HEK293 (cell line): ENCODE measurements at regions of chr1 and their contacts with region 1.

Region 1: GRCh38 chr1:39196244-39197215 is 8.0 kb upstream of the MACF1 start:
- H3K4me3 ChIP-seq: no peak overlapping the region
- H3K27ac ChIP-seq: no peak overlapping the region
- H3K4me1 ChIP-seq: peaks cover 10% of the 10 kb centered on the region
- CTCF ChIP-seq: no peak

Region 2: GRCh38 chr1:39116868-39117728 is 79.4 kb before region 1 on chr1:
- CTCF ChIA-PET with region 1: interaction called, 11 read pairs
- POLR2A ChIA-PET with region 1: no interaction called
- H3K4me3 ChIP-seq: no peak overlapping the region
- H3K27ac ChIP-seq: no peak overlapping the region
- H3K4me1 ChIP-seq: peaks cover 31% of the 10 kb centered on the region
- CTCF ChIP-seq: no peak

Region 3: GRCh38 chr1:39158327-39159086 is 38.0 kb before region 1 on chr1:
- CTCF ChIA-PET with region 1: interaction called, 21 read pairs
- POLR2A ChIA-PET with region 1: no interaction called
- H3K4me3 ChIP-seq: peak overlapping the region; percentile 42
- H3K27ac ChIP-seq: no peak overlapping the region
- H3K4me1 ChIP-seq: peaks cover 16% of the 10 kb centered on the region
- CTCF ChIP-seq: 0 out of 2 replicates have a peak, but pooled peaks have one; percentile 13

Region 4: DNA sequence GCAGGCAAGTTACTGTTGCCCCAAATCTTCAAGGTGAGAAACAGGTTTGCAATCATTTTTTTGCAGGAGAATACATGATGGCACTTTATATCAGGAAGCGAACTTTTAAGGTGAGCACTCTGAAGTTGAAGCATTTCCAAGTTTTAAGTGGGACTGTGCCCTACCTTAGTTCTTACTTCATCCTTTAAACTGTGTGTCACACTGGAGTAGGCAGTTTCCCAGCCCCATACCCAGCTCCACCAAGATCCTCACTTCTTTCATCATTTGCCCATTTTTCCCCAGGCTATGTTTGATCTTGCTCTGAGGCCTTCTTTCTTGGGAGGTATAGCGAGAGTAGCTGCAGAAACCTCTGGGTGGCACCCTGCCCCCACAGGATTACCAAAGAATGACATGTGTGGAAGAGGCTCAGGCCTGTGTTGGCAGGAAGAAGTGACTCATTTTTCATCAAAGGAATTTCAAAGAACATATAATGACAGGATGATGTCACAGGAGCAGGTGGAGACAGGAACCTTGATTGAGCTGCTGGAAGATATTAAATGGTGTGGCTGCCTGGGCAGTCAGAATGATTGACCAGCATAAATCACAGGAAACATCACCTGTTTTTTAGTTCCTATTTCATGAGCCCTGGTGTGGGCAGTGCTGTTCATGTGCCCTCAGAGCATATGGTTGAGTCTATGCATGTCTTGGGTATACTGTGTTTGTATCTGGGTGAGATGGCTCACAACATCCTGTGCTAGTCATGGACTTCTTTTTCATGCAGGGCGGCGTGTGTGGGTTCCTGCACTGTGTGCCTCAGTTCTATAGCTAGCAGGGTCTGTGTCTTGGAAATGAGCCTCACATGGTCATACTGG is 12.8 kb before region 1 on chr1:
- CTCF ChIA-PET with region 1: interaction called, 20 read pairs
- POLR2A ChIA-PET with region 1: interaction called, 3 read pairs
- H3K4me3 ChIP-seq: no peak overlapping the region
- H3K27ac ChIP-seq: peak overlapping the region; percentile 1; the same call in 1 of the 2 replicates
- H3K4me1 ChIP-seq: peaks cover 18% of the 10 kb centered on the region
- CTCF ChIP-seq: peak; percentile 75

Region 5: DNA sequence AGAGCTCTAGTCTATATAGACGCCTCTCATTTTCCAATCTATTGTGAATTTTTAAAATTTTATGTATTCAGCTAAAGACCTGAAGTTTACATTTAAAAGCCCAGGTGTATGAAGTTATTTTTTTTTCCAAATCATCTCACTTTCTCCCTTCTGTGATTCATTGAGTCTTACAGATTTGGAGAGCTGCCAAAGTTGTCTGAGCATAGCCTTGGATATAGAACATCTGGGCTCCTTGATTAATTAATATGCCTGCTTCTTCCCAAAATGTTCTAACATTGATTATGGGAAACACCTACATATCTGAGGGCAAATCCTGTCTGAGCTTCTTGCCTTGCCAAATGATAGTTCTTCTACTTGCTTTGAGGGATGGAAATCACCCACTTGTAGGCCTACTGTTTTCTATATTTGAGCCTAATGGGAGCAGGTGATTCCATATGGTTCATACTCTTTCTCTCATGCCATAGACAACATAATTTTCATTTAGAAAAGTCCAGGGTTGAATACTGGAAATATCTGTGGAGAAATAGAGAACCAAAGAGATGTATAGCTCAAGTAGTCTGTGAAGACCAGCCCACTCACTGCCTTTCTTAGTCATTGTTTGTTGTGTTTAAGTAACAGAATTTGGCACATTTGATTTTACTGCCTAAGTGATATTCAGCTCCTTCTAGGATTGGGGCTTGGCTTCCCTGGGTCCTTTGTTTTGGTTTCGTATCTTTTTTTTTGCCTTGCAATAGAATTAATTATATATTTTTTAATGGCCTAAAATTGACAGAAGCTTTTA is 54.1 kb after region 1 on chr1:
- CTCF ChIA-PET with region 1: interaction called, 184 read pairs
- POLR2A ChIA-PET with region 1: no interaction called
- H3K4me3 ChIP-seq: no peak overlapping the region
- H3K27ac ChIP-seq: no peak overlapping the region
- H3K4me1 ChIP-seq: peaks cover 4% of the 10 kb centered on the region; the same call in 1 of the 2 replicates
- CTCF ChIP-seq: no peak

Region 6: DNA sequence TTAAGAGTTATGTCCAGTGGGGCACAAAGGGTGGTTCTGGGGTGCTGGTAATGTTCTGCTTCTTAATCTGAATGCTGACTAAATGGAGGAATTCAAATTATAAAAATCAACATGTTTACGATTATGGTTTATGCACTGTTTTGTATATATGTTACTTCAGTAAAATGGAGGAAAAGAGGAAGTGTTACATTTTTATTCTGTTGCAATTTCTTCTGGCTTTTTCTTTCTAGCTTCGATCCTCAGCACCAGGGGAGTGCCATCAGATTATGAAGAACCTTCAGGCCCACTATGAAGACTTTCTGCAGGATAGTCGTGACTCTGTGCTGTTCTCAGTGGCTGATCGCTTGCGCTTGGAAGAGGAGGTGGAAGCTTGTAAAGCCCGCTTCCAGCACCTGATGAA is 113.5 kb after region 1 on chr1:
- CTCF ChIA-PET with region 1: no interaction called
- POLR2A ChIA-PET with region 1: no interaction called
- H3K4me3 ChIP-seq: no peak overlapping the region
- H3K27ac ChIP-seq: no peak overlapping the region
- H3K4me1 ChIP-seq: no peaks in the 10 kb centered on the region
- CTCF ChIP-seq: no peak

Region 7: DNA sequence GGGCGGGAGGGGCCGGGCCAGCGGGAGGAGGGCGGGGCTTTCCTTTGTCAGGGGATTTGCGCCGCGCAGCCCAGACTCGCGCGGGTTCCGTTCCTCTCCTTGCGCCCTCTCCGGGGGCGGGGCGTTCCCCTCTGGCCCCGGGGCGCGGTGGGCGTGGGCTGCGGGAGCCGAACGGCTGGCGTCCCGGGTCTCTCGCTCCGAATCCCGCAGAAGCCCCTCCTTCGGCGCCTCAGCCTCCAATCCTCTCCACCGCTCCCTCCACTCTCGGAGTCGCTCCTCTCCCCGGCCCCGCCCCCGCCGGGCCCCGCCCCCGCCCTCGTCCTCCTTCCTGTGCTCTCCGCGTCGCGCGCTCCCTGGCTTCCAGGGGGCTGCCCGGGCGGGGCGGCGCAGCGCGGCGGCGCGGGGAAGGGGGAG is 212.1 kb after region 1 on chr1:
- CTCF ChIA-PET with region 1: interaction called, 14 read pairs
- POLR2A ChIA-PET with region 1: no interaction called
- H3K4me3 ChIP-seq: peak overlapping the region; percentile 83
- H3K27ac ChIP-seq: peak overlapping the region; percentile 75
- H3K4me1 ChIP-seq: peaks cover 9% of the 10 kb centered on the region
- CTCF ChIP-seq: no peak